ENCODE measurements at regions of chr9 and their contacts with region 1.

Region 1: GRCh38 chr9:13088720-13089427 is 190.6 kb downstream of the MPDZ start:
- DNase-seq: peak; percentile 45
- H3K4me3 ChIP-seq: no peak overlapping the region
- H3K27ac ChIP-seq: no peak overlapping the region
- H3K4me1 ChIP-seq: no peaks in the 10 kb centered on the region
- CTCF ChIP-seq: peak; percentile 84

Region 2: GRCh38 chr9:12723409-12724028 is 365.4 kb before region 1 on chr9:
- CTCF ChIA-PET with region 1: no interaction called
- POLR2A ChIA-PET with region 1: interaction called, 3 read pairs
- intact Hi-C with region 1: loop called (anchors 5 kb)
- DNase-seq: no peak
- H3K4me3 ChIP-seq: no peak overlapping the region
- H3K27ac ChIP-seq: no peak overlapping the region
- H3K4me1 ChIP-seq: no peaks in the 10 kb centered on the region
- CTCF ChIP-seq: peak; percentile 63

Measured in OCI-LY7 (cell line).